ENCODE measurements at regions of chr20 and their contacts with region 1.

Region 1: GRCh38 chr20:37564388-37565133 is 36.9 kb upstream of the BLCAP start:
- DNase-seq: peak in 1 of 2 experiments; percentile 93
- H3K4me3 ChIP-seq: no peak overlapping the region
- H3K27ac ChIP-seq: no peak overlapping the region
- H3K4me1 ChIP-seq: peaks cover 2 to 14% (median 7%) of the 10 kb centered on the region in 4 experiments; a peak in 5 of 7 replicates
- H3K27me3 ChIP-seq: peaks cover 0 to 13% (median 5%) of the 10 kb centered on the region in 4 experiments; a peak in 5 of 7 replicates
- CTCF ChIP-seq: peak; percentile 70 to 97 (median 87)
- EP300 ChIP-seq: no peak; a peak in 1 of 3 replicates
- POLR2A ChIP-seq: no peak
- RAD21 ChIP-seq: peak; percentile 98 to 99

Region 2: GRCh38 chr20:37598100-37598543 is 33.6 kb after region 1 on chr20:
- CTCF ChIA-PET with region 1: interaction called, 10 read pairs
- POLR2A ChIA-PET with region 1: no interaction called
- DNase-seq: peak; percentile 7 to 82
- H3K4me3 ChIP-seq: peak overlapping the region; percentile 22 to 60 (median 29); a peak in 5 of 8 replicates
- H3K27ac ChIP-seq: peak overlapping the region; percentile 62; the same call in 1 of the 2 replicates
- H3K4me1 ChIP-seq: peaks cover 2 to 10% (median 2%) of the 10 kb centered on the region in 4 experiments; a peak in 3 of 7 replicates
- H3K27me3 ChIP-seq: no peaks in the 10 kb centered on the region
- CTCF ChIP-seq: no peak
- EP300 ChIP-seq: peak in 1 of 2 experiments; percentile 79; a peak in 1 of 3 replicates
- POLR2A ChIP-seq: peak in 1 of 2 experiments; percentile 54; a peak in 1 of 3 replicates
- RAD21 ChIP-seq: no peak

Region 3: DNA sequence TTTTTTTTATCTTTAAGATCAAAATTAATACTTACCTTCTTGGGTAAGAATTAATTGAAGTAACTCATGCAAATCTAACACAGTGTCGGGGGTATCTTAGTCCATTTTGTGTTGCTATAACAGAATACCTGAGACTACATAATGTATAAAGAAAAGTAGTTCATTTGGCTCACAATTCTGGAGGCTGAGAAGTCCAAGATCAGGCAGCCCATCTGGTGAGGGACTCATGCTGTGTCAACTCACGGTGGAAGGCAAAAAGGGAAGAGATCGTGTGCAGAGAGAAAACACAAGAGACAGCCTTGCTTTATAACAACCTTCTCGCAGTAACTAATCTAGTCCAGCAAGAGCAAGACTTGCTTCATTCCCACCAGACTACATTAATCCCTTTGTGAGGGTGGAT is 245.5 kb after region 1 on chr20:
- CTCF ChIA-PET with region 1: interaction called, 10 read pairs
- POLR2A ChIA-PET with region 1: no interaction called
- DNase-seq: no peak
- H3K4me3 ChIP-seq: no peak overlapping the region
- H3K27ac ChIP-seq: no peak overlapping the region
- H3K4me1 ChIP-seq: peaks cover 0 to 7% (median 3%) of the 10 kb centered on the region in 4 experiments; a peak in 5 of 7 replicates
- H3K27me3 ChIP-seq: peaks cover 0 to 1% (median 0%) of the 10 kb centered on the region in 4 experiments; a peak in 1 of 7 replicates
- CTCF ChIP-seq: no peak
- EP300 ChIP-seq: no peak
- POLR2A ChIP-seq: no peak
- RAD21 ChIP-seq: no peak

Region 4: DNA sequence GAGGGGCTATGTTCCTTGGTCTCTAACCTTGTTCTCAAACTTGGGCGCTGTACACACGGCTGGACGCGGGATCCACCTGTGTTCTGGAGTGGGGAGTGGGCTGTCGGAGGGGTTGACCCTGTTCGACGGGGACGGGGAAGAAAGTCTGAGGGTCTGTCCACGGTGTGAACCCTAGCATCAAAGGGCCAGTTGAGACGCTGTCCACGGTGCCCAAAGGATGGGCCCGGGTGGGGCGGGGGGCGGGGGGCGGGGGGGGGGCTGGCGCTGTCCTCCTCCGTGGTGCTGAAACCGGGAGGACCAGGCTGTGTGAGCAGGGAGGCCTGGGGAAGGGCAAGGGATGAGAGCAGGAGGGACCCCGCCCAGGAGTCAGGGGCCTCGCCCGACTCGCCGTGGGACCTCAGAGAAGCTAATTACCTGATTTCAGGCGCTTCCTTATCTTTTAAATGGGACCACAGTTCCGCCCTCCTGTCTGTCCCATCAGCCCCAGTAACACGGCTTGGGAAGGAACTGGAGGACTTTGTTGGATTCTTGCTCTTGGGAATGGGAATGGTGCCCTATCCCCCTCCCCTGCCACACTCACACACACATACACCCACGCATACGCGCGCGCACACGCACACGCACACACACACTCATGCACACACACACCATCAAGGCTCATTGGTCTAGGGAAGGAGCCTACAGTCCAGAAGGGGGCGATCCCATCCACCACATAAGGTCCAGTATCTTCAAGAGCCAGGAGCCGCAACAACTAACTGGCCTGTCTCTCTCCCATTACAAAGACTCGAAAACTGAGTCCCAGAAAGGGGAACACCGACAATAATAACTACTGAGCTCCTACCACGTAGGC is 337.3 kb after region 1 on chr20:
- CTCF ChIA-PET with region 1: interaction called, 10 read pairs
- POLR2A ChIA-PET with region 1: no interaction called
- DNase-seq: peak in 1 of 2 experiments; percentile 70
- H3K4me3 ChIP-seq: peak overlapping the region in 2 of 4 experiments; percentile 8 to 69; a peak in 4 of 8 replicates
- H3K27ac ChIP-seq: no peak overlapping the region
- H3K4me1 ChIP-seq: peaks cover 6 to 17% (median 11%) of the 10 kb centered on the region in 4 experiments
- H3K27me3 ChIP-seq: no peaks in the 10 kb centered on the region; a peak in 2 of 7 replicates
- CTCF ChIP-seq: peak; percentile 64 to 81 (median 79)
- EP300 ChIP-seq: no peak
- POLR2A ChIP-seq: no peak
- RAD21 ChIP-seq: peak; percentile 79 to 90

Measured in H1 (cell line).